ENCODE measurements at regions of chr20 and their contacts with region 1.

Region 1: GRCh38 chr20:13819885-13820645 is 35.2 kb downstream of the NDUFAF5 start:
- DNase-seq: no peak
- H3K4me3 ChIP-seq: no peak overlapping the region
- H3K27ac ChIP-seq: no peak overlapping the region
- H3K4me1 ChIP-seq: 0 out of 7 replicates have a peak, but pooled peaks cover 0 to 2% (median 0%) of the 10 kb centered on the region in 4 experiments
- H3K27me3 ChIP-seq: no peaks in the 10 kb centered on the region
- CTCF ChIP-seq: peak in 2 of 3 experiments; percentile 52 to 53; a peak in 2 of 4 replicates
- EP300 ChIP-seq: no peak
- POLR2A ChIP-seq: no peak
- RAD21 ChIP-seq: peak; percentile 61

Region 2: DNA sequence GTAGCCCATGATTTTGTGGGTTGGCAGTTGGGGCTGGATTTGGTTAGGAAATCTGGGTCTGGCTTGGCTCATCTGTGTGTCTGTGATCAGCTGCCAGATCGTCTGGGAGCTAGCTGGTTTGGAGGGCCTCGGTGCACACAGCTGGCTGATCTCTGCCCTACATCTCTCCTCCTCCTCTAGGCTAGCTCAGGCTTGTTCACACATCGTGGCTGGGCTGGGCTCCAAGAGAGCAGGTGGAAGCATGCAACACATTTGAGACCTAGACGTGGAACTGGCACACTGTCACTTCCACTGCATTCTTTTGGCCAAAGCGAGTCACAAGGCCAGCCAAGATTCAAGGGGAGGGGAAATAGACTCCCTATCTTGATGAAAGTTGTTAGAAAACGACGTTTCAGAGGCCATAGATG is 19.3 kb before region 1 on chr20:
- CTCF ChIA-PET with region 1: interaction called, 12 read pairs
- POLR2A ChIA-PET with region 1: interaction called, 4 read pairs
- DNase-seq: no peak
- H3K4me3 ChIP-seq: no peak overlapping the region
- H3K27ac ChIP-seq: no peak overlapping the region
- H3K4me1 ChIP-seq: no peaks in the 10 kb centered on the region
- H3K27me3 ChIP-seq: no peaks in the 10 kb centered on the region
- CTCF ChIP-seq: no peak
- EP300 ChIP-seq: no peak
- POLR2A ChIP-seq: no peak
- RAD21 ChIP-seq: no peak

Region 3: GRCh38 chr20:13831476-13831875 is 11.4 kb after region 1 on chr20:
- CTCF ChIA-PET with region 1: interaction called, 25 read pairs
- POLR2A ChIA-PET with region 1: no interaction called
- DNase-seq: no peak
- H3K4me3 ChIP-seq: no peak overlapping the region
- H3K27ac ChIP-seq: no peak overlapping the region
- H3K4me1 ChIP-seq: no peaks in the 10 kb centered on the region
- H3K27me3 ChIP-seq: no peaks in the 10 kb centered on the region
- CTCF ChIP-seq: no peak
- EP300 ChIP-seq: no peak
- POLR2A ChIP-seq: no peak
- RAD21 ChIP-seq: no peak

Region 4: GRCh38 chr20:13913572-13913971 is 93.5 kb after region 1 on chr20:
- CTCF ChIA-PET with region 1: interaction called, 12 read pairs
- POLR2A ChIA-PET with region 1: interaction called, 3 read pairs
- DNase-seq: no peak
- H3K4me3 ChIP-seq: no peak overlapping the region
- H3K27ac ChIP-seq: no peak overlapping the region
- H3K4me1 ChIP-seq: no peaks in the 10 kb centered on the region
- H3K27me3 ChIP-seq: no peaks in the 10 kb centered on the region
- CTCF ChIP-seq: no peak
- EP300 ChIP-seq: no peak
- POLR2A ChIP-seq: no peak
- RAD21 ChIP-seq: no peak

Region 5: GRCh38 chr20:13930281-13930680 is 110.2 kb after region 1 on chr20:
- CTCF ChIA-PET with region 1: no interaction called
- POLR2A ChIA-PET with region 1: no interaction called
- DNase-seq: no peak
- H3K4me3 ChIP-seq: no peak overlapping the region
- H3K27ac ChIP-seq: no peak overlapping the region
- H3K4me1 ChIP-seq: no peaks in the 10 kb centered on the region
- H3K27me3 ChIP-seq: no peaks in the 10 kb centered on the region
- CTCF ChIP-seq: no peak
- EP300 ChIP-seq: no peak
- POLR2A ChIP-seq: no peak
- RAD21 ChIP-seq: no peak

Region 6: GRCh38 chr20:14055127-14055742 is 235.2 kb after region 1 on chr20:
- CTCF ChIA-PET with region 1: interaction called, 60 read pairs
- POLR2A ChIA-PET with region 1: no interaction called
- DNase-seq: no peak
- H3K4me3 ChIP-seq: no peak overlapping the region
- H3K27ac ChIP-seq: no peak overlapping the region
- H3K4me1 ChIP-seq: no peaks in the 10 kb centered on the region
- H3K27me3 ChIP-seq: no peaks in the 10 kb centered on the region
- CTCF ChIP-seq: peak in 2 of 3 experiments; percentile 44 to 56; a peak in 2 of 4 replicates
- EP300 ChIP-seq: no peak
- POLR2A ChIP-seq: no peak
- RAD21 ChIP-seq: peak; percentile 73 to 79

Measured in H1 (cell line).